RWPE1 (cell line): ENCODE measurements at regions of chr4 and their contacts with region 1.

Region 1: GRCh38 chr4:6806924-6807636 is 24.6 kb downstream of the KIAA0232 start:
- DNase-seq: no peak
- H3K27ac ChIP-seq: no peak overlapping the region
- CTCF ChIP-seq: no peak

Region 2: GRCh38 chr4:6788123-6788522 is 19.0 kb before region 1 on chr4:
- CTCF ChIA-PET with region 1: no interaction called
- POLR2A ChIA-PET with region 1: interaction called, 11 read pairs
- DNase-seq: no peak
- H3K27ac ChIP-seq: no peak overlapping the region
- CTCF ChIP-seq: no peak

Region 3: GRCh38 chr4:6885951-6886557 is 79.0 kb after region 1 on chr4:
- CTCF ChIA-PET with region 1: interaction called, 10 read pairs
- POLR2A ChIA-PET with region 1: no interaction called
- DNase-seq: no peak
- H3K27ac ChIP-seq: peak overlapping the region; percentile 67
- CTCF ChIP-seq: 0 out of 2 replicates have a peak, but pooled peaks have one; percentile 14

Region 4: DNA sequence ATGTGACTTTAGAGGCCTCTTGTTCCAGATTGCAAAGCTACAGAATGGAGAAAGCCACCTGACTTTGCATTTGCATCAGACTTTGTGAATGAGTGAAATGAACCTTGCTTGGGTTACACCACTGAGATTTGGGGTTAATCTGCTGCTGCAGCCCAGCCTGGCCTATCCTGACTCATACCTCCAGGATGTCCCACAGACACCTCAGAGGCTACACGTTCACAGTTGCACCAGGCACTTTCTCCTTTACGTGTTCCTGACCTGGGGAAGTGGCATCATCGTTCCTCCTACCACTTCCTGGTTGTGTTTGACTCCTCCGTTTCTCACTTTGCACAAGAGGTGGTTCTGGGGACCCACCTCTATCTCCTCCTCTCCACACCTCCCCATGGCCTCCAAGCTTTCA is 376.1 kb after region 1 on chr4:
- CTCF ChIA-PET with region 1: no interaction called
- POLR2A ChIA-PET with region 1: no interaction called
- DNase-seq: no peak
- H3K27ac ChIP-seq: no peak overlapping the region
- CTCF ChIP-seq: no peak